Activated T-helper 2 cell treated with anti-CD3 and anti-CD28 coated beads, Interferon-gamma antibody, Interleukin-2, Interleukin-4, amounts not matched to agents 10 μg/mL and 5 μg/mL and 100 μg/mL, durations not matched to agents 14 hours and 24 hours and 36 hours (primary cell): ENCODE measurements at regions of chr17 and their contacts with region 1.

Region 1: GRCh38 chr17:32142038-32142856 is at the start of gene RHOT1:
- DNase-seq: peak; percentile 76
- H3K4me3 Mint-ChIP-seq: peak within 1 kb of the TSS; percentile 99
- H3K27ac Mint-ChIP-seq: peak within 1 kb of the TSS; percentile 87
- H3K4me1 Mint-ChIP-seq: peaks cover 19% of the 10 kb centered on the region
- H3K27me3 Mint-ChIP-seq: no peaks in the 10 kb centered on the region
- total RNA-seq, gene RHOT1: 25.2 and 25.7 TPM in 2 replicates

Region 2: DNA sequence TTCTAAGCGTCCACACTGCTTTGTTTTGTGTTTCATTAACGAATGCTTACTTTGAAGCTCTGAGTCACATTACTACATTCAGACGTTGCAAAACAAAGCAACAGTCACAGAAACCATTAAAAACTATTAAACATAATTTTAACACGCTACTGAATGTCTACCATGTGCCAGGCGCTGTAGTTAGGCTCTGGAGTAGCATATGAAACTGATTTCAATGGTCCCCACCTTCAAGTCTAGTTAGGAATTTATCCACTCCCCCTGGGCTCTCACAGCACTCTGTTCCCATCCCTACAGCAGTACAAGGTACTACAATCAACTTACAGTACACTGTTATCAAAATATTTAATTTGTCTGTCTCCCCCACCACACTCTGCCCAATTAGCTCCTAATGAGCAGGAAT is 241.4 kb before region 1 on chr17:
- intact Hi-C with region 1: loop called (anchors 5 kb)
- DNase-seq: no peak
- H3K4me3 Mint-ChIP-seq: no peak overlapping the region
- H3K27ac Mint-ChIP-seq: no peak overlapping the region
- H3K4me1 Mint-ChIP-seq: peaks cover 10% of the 10 kb centered on the region
- H3K27me3 Mint-ChIP-seq: no peaks in the 10 kb centered on the region

Region 3: DNA sequence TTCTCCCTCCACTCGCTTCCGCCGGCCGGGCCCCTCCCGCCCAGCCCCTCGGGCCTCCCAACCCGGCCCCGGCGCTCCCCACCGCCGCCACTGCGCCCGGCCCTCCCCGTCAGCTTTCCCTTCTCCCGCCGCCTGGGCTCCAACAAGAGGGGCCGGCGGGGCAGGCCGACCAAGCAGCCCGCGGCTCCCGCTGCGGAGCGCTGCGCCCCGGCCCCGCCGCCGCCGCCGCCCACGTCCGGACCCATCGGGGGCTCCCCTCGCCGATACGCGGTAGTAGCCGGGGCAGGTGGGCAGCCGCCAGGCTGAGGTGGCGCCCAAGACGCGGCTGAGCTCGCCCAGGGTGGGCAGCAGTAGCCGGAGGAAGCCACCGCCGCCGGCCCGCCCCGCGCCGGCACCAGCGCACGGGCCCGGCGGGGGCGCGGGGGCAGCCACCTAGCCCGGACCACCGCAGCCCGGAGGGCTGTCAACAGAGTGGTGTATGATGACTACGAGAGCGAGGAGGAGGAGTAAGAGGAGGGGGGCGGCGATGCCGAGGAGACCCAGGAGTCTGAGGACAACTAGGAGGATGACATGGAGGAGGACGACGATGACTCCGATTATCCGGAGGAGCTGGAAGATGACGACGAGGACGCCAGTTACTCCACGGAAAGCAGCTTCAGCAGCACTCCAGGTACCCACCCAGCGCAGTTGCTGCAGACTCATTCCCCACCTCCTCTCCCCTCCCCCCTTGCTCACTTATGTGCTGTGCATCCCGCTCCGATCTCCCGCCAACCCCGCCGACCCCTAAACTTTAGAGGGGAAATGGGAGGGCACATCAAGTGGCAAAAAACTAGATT is 134.6 kb before region 1 on chr17:
- intact Hi-C with region 1: loop called (anchors 2 kb)
- DNase-seq: peak; percentile 32
- H3K4me3 Mint-ChIP-seq: peak overlapping the region; percentile 85
- H3K27ac Mint-ChIP-seq: peak overlapping the region; percentile 78
- H3K4me1 Mint-ChIP-seq: peaks cover 33% of the 10 kb centered on the region
- H3K27me3 Mint-ChIP-seq: no peaks in the 10 kb centered on the region

Region 4: DNA sequence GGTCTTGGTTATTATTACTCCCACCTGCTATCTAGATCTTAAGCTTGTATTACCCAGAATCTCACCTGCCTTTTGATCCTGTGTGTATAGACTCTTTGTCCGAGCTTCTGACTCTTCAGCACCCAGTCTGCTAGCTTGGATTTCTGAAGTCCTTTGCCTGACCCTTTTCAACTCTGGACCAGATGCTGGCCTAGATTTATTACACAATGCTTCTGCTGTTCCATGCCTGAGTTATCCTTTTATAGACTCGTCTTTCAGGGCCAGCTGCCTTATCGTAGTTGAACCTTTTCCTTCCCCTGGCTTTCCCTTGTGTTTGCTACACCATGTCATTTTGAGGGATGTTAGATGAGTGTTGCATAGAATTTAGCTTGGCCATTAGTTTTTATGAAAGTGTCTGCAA is 32.6 kb after region 1 on chr17:
- intact Hi-C with region 1: no loop called
- DNase-seq: no peak
- H3K4me3 Mint-ChIP-seq: no peak overlapping the region
- H3K27ac Mint-ChIP-seq: no peak overlapping the region
- H3K4me1 Mint-ChIP-seq: no peaks in the 10 kb centered on the region
- H3K27me3 Mint-ChIP-seq: no peaks in the 10 kb centered on the region

Region 5: DNA sequence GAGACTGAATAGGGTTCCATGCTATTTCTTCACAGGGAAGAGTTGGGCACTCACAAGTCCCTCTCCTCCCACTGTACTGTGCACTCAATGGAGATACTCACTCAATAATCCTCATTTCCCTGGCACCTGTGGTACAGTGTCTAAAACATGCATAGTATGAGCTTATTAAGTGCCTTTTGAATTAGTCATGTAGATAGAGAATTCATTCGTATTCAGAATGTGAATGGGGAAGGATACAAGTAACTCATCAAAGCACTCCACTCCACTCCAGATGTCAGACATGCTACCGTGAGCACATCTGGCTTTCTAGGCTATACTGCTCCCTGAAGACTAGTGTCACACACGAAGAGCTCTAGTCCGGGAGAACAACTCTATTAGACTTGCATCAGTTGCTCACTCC is 193.4 kb after region 1 on chr17:
- intact Hi-C with region 1: loop called (anchors 10 kb)
- DNase-seq: no peak
- H3K4me3 Mint-ChIP-seq: no peak overlapping the region
- H3K27ac Mint-ChIP-seq: no peak overlapping the region
- H3K4me1 Mint-ChIP-seq: peaks cover 18% of the 10 kb centered on the region
- H3K27me3 Mint-ChIP-seq: no peaks in the 10 kb centered on the region